Ovary (tissue), 10 donors: ENCODE measurements at regions of chr16 and their contacts with region 1.

Region 1: DNA sequence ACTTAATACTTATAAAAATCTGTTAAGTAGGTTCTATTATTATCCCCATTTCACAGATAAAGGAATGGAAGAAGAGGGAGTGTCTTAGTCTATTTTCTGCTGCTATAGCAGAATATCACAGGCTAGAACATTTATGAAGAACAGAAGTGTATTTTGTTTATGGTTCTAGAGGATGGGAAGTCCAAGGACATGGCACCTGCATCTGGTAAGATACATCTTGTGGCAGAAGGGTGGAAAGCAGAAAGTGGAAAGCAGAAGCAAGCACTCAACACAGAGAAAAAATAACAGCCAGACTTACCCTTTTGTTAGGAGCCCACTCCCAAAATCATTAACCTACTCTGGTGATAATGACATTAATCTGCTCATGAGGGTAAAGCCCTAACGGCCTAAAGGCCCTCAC is 422.4 kb downstream of the NPIPA8 start:
- DNase-seq: no peak
- H3K4me3 ChIP-seq: no peak overlapping the region
- H3K27ac ChIP-seq: no peak overlapping the region
- H3K4me1 ChIP-seq: no peaks in the 10 kb centered on the region
- H3K27me3 ChIP-seq: no peaks in the 10 kb centered on the region
- CTCF ChIP-seq: no peak
- EP300 ChIP-seq: no peak
- POLR2A ChIP-seq: no peak

Region 2: GRCh38 chr16:17939122-17939536 is 25.0 kb after region 1 on chr16:
- intact Hi-C with region 1: loop called in 1 of 4 experiments (anchors 1 kb)
- DNase-seq: no peak
- H3K4me3 ChIP-seq: no peak overlapping the region
- H3K27ac ChIP-seq: no peak overlapping the region
- H3K4me1 ChIP-seq: no peaks in the 10 kb centered on the region
- H3K27me3 ChIP-seq: no peaks in the 10 kb centered on the region
- CTCF ChIP-seq: no peak
- EP300 ChIP-seq: no peak
- POLR2A ChIP-seq: no peak

Region 3: DNA sequence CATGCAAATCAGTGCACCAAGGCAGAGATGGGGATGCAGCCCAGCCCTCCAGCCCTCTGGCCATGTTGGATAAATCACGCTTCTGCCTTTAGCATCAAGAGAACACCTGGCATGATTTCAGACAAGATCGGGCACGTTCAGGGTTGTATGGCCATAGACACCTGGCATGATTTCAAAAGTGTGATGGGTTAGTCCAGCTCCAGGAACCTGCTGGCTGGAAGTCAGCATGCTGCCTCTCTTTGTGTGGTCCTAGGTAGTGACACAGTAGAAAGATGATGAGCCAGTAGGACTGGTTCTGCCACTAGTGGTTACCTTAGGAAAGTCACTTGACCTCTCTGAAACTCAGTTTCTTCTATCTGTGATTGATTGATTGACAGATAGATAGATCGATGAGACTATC is 95.4 kb after region 1 on chr16:
- intact Hi-C with region 1: loop called in 1 of 4 experiments (anchors 5 kb)
- DNase-seq: no peak
- H3K4me3 ChIP-seq: no peak overlapping the region
- H3K27ac ChIP-seq: no peak overlapping the region
- H3K4me1 ChIP-seq: no peaks in the 10 kb centered on the region
- H3K27me3 ChIP-seq: no peaks in the 10 kb centered on the region
- CTCF ChIP-seq: no peak
- EP300 ChIP-seq: no peak
- POLR2A ChIP-seq: no peak